Activated CD4-positive, alpha-beta T cell treated with anti-CD3 and anti-CD28 coated beads, Interleukin-2, amount 10 ng/mL, durations not matched to agents 24 days and 14 days (primary cell): ENCODE measurements at regions of chr13 and their contacts with region 1.

Region 1: DNA sequence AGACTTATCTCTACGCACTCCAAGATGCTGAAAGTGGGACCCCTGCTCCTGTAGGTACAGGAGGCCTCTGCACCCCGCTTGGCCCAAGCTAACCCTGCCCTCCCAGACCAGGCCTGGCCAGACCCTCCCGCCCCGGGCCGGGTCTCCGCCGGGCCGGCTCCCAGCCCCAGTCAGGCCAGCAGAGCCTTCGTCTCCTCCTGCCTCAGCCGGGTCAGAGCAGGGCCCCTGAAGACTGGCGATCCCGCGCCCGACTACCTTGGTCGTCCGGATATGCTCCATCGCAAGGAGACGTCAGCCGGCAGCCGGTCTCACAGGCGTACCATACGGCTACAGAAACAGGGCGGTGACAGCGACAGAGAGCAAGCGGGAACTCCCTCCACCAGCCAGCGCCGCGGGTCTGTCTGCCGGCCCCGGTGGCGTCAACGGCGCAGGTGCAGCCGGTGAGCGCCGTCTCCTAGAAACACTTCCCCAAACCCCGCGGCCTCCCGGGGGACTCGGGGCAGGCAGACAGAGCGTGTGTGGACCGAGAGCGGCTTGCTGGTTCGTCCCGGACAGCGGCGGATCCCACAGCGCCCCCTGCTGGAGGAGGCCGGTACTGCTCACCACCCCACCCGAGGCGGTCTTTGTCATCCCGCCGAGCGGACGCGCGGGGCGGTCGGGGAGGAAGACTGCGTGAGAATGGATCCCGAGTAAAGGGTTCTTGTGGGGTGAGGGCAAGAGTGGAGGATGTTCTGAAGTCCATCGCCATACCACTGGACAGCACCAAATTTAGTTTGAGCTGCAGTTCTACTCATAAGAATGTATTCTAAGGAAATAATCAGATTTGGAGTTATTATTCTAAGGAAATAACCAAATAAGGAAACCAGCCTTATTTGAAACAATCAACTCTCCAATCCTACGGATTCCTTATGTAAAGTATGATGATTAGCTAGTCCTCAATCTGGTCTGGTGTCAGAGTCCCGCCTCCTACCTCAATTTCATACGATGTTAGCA is at the start of gene MTMR6:
- DNase-seq: peak; percentile 98
- H3K4me3 Mint-ChIP-seq: peak within 1 kb of the TSS; percentile 91
- H3K27ac Mint-ChIP-seq: peak within 1 kb of the TSS; percentile 95
- H3K4me1 Mint-ChIP-seq: peaks cover 28% of the 10 kb centered on the region
- H3K27me3 Mint-ChIP-seq: peaks cover 15% of the 10 kb centered on the region
- total RNA-seq, gene MTMR6: 15.7 and 16.2 TPM in 2 replicates

Region 2: DNA sequence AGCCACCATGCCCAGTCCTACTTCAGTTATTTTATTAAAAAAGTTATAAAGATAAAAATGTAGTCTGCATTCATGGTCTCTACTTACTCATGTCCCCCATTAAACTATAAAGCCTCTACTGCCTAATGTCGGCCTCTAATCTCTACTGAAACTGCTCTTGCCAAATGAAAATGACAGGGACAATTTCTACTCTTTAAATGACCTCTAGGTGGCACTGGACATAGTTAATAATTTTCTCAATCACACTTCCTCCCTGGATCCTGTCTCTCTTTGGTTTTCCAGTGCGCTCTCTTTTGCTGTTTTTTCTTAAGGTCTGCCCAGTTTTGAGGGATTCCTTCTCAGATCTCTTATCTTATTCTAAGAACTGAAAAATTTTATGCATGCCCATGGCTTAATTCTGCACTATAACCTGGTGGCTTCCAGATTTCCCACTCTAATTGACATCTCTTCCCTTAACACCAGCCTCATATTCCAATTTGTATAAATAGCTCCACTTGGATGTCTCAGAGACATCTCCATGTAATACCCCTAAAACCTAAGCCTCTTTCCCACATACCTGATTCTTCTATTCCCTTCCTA is 54.2 kb before region 1 on chr13:
- intact Hi-C with region 1: loop called (anchors 2 kb)
- DNase-seq: no peak
- H3K4me3 Mint-ChIP-seq: no peak overlapping the region
- H3K27ac Mint-ChIP-seq: no peak overlapping the region
- H3K4me1 Mint-ChIP-seq: no peaks in the 10 kb centered on the region
- H3K27me3 Mint-ChIP-seq: peaks cover 3% of the 10 kb centered on the region

Region 3: GRCh38 chr13:25267715-25268114 is 19.6 kb before region 1 on chr13:
- intact Hi-C with region 1: loop called (anchors 2 kb)
- DNase-seq: no peak
- H3K4me3 Mint-ChIP-seq: no peak overlapping the region
- H3K27ac Mint-ChIP-seq: no peak overlapping the region
- H3K4me1 Mint-ChIP-seq: no peaks in the 10 kb centered on the region
- H3K27me3 Mint-ChIP-seq: no peaks in the 10 kb centered on the region

Region 4: GRCh38 chr13:25301347-25302047 is 14.2 kb after region 1 on chr13 and contains the start of gene NUP58:
- intact Hi-C with region 1: loop called (anchors 1 kb)
- DNase-seq: peak; percentile 98
- H3K4me3 Mint-ChIP-seq: peak within 1 kb of the TSS; percentile 96
- H3K27ac Mint-ChIP-seq: peak within 1 kb of the TSS; percentile 96
- H3K4me1 Mint-ChIP-seq: peaks cover 40% of the 10 kb centered on the region
- H3K27me3 Mint-ChIP-seq: peaks cover 20% of the 10 kb centered on the region
- total RNA-seq, gene NUP58: 143 and 149 TPM in 2 replicates

Region 5: GRCh38 chr13:25874907-25875306 is 587.6 kb after region 1 on chr13:
- intact Hi-C with region 1: loop called (anchors 10 kb)
- DNase-seq: peak; percentile 89
- H3K4me3 Mint-ChIP-seq: peak overlapping the region; percentile 54
- H3K27ac Mint-ChIP-seq: peak overlapping the region; percentile 17
- H3K4me1 Mint-ChIP-seq: peaks cover 62% of the 10 kb centered on the region
- H3K27me3 Mint-ChIP-seq: no peaks in the 10 kb centered on the region